Psoas muscle (tissue), 8 donors: ENCODE measurements at regions of chr3 and their contacts with region 1.

Region 1: DNA sequence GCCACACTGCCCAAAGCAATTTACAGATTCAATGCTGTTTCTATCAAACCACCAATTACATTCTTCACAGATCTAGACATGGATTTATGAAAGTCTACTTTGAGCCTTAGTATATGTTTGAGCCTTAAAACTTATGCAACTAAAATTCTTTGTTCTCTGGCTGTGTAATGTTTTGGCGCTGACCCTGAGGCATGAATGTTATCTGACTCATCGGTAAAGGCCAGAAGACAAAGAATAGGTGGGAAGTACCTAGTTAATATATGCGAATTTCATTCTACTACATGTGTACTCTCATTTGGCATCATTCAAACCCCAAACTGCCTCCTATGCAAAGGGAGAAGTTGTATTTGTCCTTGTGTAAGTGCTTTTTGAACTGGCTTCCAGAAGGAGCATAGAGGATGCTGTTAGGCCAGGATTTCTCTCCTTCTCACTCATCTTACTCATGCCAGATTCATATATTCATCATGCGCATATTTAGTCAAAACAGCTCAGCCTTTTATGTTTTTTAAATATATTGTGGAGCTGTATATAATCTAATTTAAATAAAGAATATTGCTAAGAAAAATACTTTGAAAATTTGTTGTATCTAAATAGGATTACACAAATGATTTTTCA is 204.2 kb downstream of the NFKBIZ start:
- DNase-seq: no peak
- ATAC-seq: no peak
- H3K4me3 ChIP-seq: no peak overlapping the region
- H3K27ac ChIP-seq: no peak overlapping the region
- H3K4me1 ChIP-seq: no peaks in the 10 kb centered on the region
- H3K27me3 ChIP-seq: no peaks in the 10 kb centered on the region
- CTCF ChIP-seq: no peak

Region 2: GRCh38 chr3:102006812-102007485 is 46.5 kb before region 1 on chr3:
- intact Hi-C with region 1: no loop called
- DNase-seq: no peak
- ATAC-seq: no peak
- H3K4me3 ChIP-seq: no peak overlapping the region
- H3K27ac ChIP-seq: no peak overlapping the region
- H3K4me1 ChIP-seq: no peaks in the 10 kb centered on the region
- H3K27me3 ChIP-seq: no peaks in the 10 kb centered on the region
- CTCF ChIP-seq: no peak

Region 3: GRCh38 chr3:103752986-103753385 is 1699.5 kb after region 1 on chr3:
- intact Hi-C with region 1: loop called in 1 of 2 experiments (anchors 5 kb)
- DNase-seq: no peak
- ATAC-seq: no peak
- H3K4me3 ChIP-seq: no peak overlapping the region
- H3K27ac ChIP-seq: no peak overlapping the region
- H3K4me1 ChIP-seq: no peaks in the 10 kb centered on the region
- H3K27me3 ChIP-seq: no peaks in the 10 kb centered on the region
- CTCF ChIP-seq: no peak